T-cell (primary cell): ENCODE measurements at regions of chr11 and their contacts with region 1.

Region 1: GRCh38 chr11:130069684-130070108 is at the start of gene APLP2:
- DNase-seq: peak; percentile 87 to 99 (median 97)
- ATAC-seq: peak; percentile 89 to 93 (median 92)
- H3K4me3 ChIP-seq: peak within 1 kb of the TSS; percentile 84 to 86
- H3K4me3 Mint-ChIP-seq: peak within 1 kb of the TSS; percentile 92 to 97 (median 95)
- H3K27ac ChIP-seq: peak within 1 kb of the TSS; percentile 82
- H3K27ac Mint-ChIP-seq: peak within 1 kb of the TSS; percentile 94 to 96
- H3K4me1 ChIP-seq: peaks cover 2 to 14% of the 10 kb centered on the region in 2 experiments
- H3K4me1 Mint-ChIP-seq: peaks cover 21 to 33% (median 26%) of the 10 kb centered on the region in 3 donors
- H3K27me3 ChIP-seq: no peaks in the 10 kb centered on the region
- H3K27me3 Mint-ChIP-seq: no peaks in the 10 kb centered on the region
- total RNA-seq, gene APLP2: 36.4 to 61.9 (median 51.0) TPM

Region 2: GRCh38 chr11:130109386-130109785 is 39.7 kb after region 1 on chr11:
- CTCF ChIA-PET with region 1: no interaction called
- POLR2A ChIA-PET with region 1: interaction called in 1 of 2 experiments, 15 read pairs
- DNase-seq: no peak
- ATAC-seq: no peak
- H3K4me3 ChIP-seq: no peak overlapping the region
- H3K4me3 Mint-ChIP-seq: no peak overlapping the region
- H3K27ac ChIP-seq: no peak overlapping the region
- H3K27ac Mint-ChIP-seq: no peak overlapping the region
- H3K4me1 ChIP-seq: no peaks in the 10 kb centered on the region
- H3K4me1 Mint-ChIP-seq: peaks cover 0 to 5% (median 0%) of the 10 kb centered on the region in 3 donors
- H3K27me3 ChIP-seq: no peaks in the 10 kb centered on the region
- H3K27me3 Mint-ChIP-seq: no peaks in the 10 kb centered on the region

Region 3: DNA sequence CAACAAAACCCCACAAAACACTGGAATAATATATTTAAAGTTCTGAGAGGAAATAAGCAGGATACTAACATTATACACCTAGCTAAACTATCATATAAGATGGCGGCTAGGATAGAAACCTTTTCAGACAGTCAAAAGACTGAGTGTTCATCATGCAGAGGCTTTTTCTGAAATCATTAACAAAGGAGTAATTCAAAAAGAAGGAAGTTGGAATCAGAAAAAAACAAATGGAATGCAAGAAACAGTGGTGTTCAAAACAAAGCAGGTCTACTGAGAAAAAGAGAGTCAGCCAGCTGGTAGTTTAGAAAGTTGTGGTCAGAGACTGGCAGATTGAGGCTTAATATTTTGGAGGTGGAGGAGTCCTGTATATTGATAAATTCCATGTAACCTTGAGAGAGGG is 275.1 kb after region 1 on chr11:
- CTCF ChIA-PET with region 1: no interaction called
- POLR2A ChIA-PET with region 1: no interaction called
- DNase-seq: no peak
- ATAC-seq: no peak
- H3K4me3 ChIP-seq: no peak overlapping the region
- H3K4me3 Mint-ChIP-seq: no peak overlapping the region
- H3K27ac ChIP-seq: no peak overlapping the region
- H3K27ac Mint-ChIP-seq: no peak overlapping the region
- H3K4me1 ChIP-seq: peaks cover 0 to 16% of the 10 kb centered on the region in 2 experiments
- H3K4me1 Mint-ChIP-seq: peaks cover 9 to 14% (median 10%) of the 10 kb centered on the region in 3 donors
- H3K27me3 ChIP-seq: no peaks in the 10 kb centered on the region
- H3K27me3 Mint-ChIP-seq: no peaks in the 10 kb centered on the region